ENCODE measurements at regions of chr5 and their contacts with region 1.

Region 1: GRCh38 chr5:134041570-134042411 is 37.0 kb upstream of the VDAC1 start:
- DNase-seq: peak in 1 of 5 donors; percentile 13
- H3K4me3 ChIP-seq: no peak overlapping the region
- H3K4me3 Mint-ChIP-seq: peak overlapping the region in 4 of 7 donors; percentile 41 to 64 (median 49)
- H3K27ac ChIP-seq: no peak overlapping the region
- H3K27ac Mint-ChIP-seq: peak overlapping the region in 7 of 8 donors; percentile 17 to 89 (median 72)
- H3K4me1 ChIP-seq: peaks cover 36% of the 10 kb centered on the region
- H3K4me1 Mint-ChIP-seq: peaks cover 19 to 56% (median 37%) of the 10 kb centered on the region in 3 donors
- H3K27me3 ChIP-seq: no peaks in the 10 kb centered on the region
- H3K27me3 Mint-ChIP-seq: no peaks in the 10 kb centered on the region

Region 2: GRCh38 chr5:134053840-134054338 is 12.1 kb after region 1 on chr5:
- CTCF ChIA-PET with region 1: interaction called, 36 read pairs
- POLR2A ChIA-PET with region 1: no interaction called
- DNase-seq: peak in 1 of 5 donors; percentile 35
- H3K4me3 ChIP-seq: peak overlapping the region; percentile 28
- H3K4me3 Mint-ChIP-seq: peak overlapping the region in 4 of 7 donors; percentile 24 to 76 (median 46)
- H3K27ac ChIP-seq: no peak overlapping the region
- H3K27ac Mint-ChIP-seq: peak overlapping the region in 7 of 8 donors; percentile 1 to 87 (median 76)
- H3K4me1 ChIP-seq: peaks cover 42% of the 10 kb centered on the region
- H3K4me1 Mint-ChIP-seq: peaks cover 16 to 41% (median 16%) of the 10 kb centered on the region in 3 donors
- H3K27me3 ChIP-seq: no peaks in the 10 kb centered on the region
- H3K27me3 Mint-ChIP-seq: no peaks in the 10 kb centered on the region

Region 3: DNA sequence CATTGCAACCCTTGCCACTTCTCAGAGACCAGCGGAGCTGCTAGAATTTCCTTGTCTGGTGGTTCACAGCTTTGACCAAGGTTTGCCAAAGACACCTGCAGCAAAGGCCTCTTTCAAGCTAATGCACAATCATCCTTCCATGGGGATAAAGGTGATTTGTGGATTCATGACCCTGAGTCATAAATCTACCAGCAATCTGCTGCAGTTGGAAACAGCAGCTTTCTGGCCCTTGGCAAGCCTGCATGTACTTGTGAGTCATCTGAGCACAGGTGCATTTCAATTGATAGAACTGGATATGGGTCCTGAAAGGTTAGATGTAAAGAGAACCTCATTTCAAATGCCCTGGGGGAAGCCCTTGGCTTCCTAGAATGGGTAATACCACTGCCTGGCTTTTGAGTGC is 51.1 kb after region 1 on chr5:
- CTCF ChIA-PET with region 1: interaction called, 20 read pairs
- POLR2A ChIA-PET with region 1: interaction called, 3 read pairs
- DNase-seq: no peak
- H3K4me3 ChIP-seq: no peak overlapping the region
- H3K4me3 Mint-ChIP-seq: peak overlapping the region in 5 of 7 donors; percentile 12 to 57 (median 31)
- H3K27ac ChIP-seq: no peak overlapping the region
- H3K27ac Mint-ChIP-seq: peak overlapping the region in 7 of 8 donors; percentile 1 to 91 (median 58)
- H3K4me1 ChIP-seq: peaks cover 92% of the 10 kb centered on the region
- H3K4me1 Mint-ChIP-seq: peaks cover 63 to 83% (median 72%) of the 10 kb centered on the region in 3 donors
- H3K27me3 ChIP-seq: no peaks in the 10 kb centered on the region
- H3K27me3 Mint-ChIP-seq: no peaks in the 10 kb centered on the region

Region 4: GRCh38 chr5:134125039-134126015 is 83.5 kb after region 1 on chr5:
- CTCF ChIA-PET with region 1: interaction called, 50 read pairs
- POLR2A ChIA-PET with region 1: interaction called, 7 read pairs
- DNase-seq: no peak
- H3K4me3 ChIP-seq: peak overlapping the region; percentile 79
- H3K4me3 Mint-ChIP-seq: peak overlapping the region; percentile 91 to 99 (median 96)
- H3K27ac ChIP-seq: peak overlapping the region; percentile 9
- H3K27ac Mint-ChIP-seq: peak overlapping the region; percentile 92 to 100 (median 98)
- H3K4me1 ChIP-seq: peaks cover 100% of the 10 kb centered on the region
- H3K4me1 Mint-ChIP-seq: peaks cover 89 to 99% (median 99%) of the 10 kb centered on the region in 3 donors
- H3K27me3 ChIP-seq: no peaks in the 10 kb centered on the region
- H3K27me3 Mint-ChIP-seq: peaks cover 0 to 2% of the 10 kb centered on the region in 2 donors

Region 5: GRCh38 chr5:134145779-134146581 is 104.2 kb after region 1 on chr5:
- CTCF ChIA-PET with region 1: interaction called, 429 read pairs
- POLR2A ChIA-PET with region 1: interaction called, 16 read pairs
- DNase-seq: peak; percentile 71 to 87 (median 76)
- H3K4me3 ChIP-seq: no peak overlapping the region
- H3K4me3 Mint-ChIP-seq: peak overlapping the region in 2 of 7 donors; percentile 26 to 57
- H3K27ac ChIP-seq: no peak overlapping the region
- H3K27ac Mint-ChIP-seq: peak overlapping the region; percentile 80 to 97 (median 90)
- H3K4me1 ChIP-seq: peaks cover 19% of the 10 kb centered on the region
- H3K4me1 Mint-ChIP-seq: peaks cover 30 to 80% (median 56%) of the 10 kb centered on the region in 3 donors
- H3K27me3 ChIP-seq: no peaks in the 10 kb centered on the region
- H3K27me3 Mint-ChIP-seq: no peaks in the 10 kb centered on the region

Region 6: DNA sequence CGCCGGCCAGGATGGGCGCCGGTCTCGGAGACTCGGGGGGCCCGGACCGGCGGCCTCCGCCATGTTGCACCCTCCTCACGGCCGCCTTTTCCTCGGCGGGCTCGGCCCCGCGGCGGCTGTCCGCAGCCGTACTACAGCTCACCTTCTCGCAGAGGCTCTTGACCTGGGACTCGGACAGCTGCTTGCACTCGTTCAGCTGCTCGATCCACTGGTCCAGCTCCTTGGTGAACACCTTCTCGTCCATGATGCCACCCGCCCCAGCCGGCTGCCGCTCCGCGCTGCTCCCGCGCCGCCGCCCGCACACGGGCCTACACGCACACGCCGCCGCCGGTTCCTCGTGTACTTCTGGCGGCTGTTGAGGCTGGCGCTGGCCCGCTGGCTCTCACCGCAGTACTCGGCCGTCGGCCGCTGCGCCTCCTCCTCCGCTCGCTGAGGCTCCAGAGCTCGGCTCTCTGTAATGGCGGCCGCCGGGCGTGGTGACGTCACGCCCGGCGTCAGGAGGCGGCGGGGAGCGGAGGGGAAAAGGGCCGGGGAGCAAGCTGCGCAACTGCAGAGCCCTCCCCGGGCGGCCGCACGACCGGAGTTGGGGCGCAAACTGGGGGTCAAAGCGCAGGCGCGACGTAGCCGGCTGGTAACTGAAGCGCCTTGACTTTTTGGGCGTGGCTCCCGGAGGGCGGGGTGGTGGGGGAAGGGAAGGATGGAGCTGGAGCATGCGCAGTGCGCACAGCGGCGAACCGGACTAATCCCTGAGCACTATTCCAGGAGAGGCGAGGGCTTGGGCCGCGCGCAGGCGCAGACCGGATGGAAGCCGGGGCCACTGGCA is 184.0 kb after region 1 on chr5 and contains the start of gene PPP2CA:
- CTCF ChIA-PET with region 1: interaction called, 13 read pairs
- POLR2A ChIA-PET with region 1: no interaction called
- DNase-seq: peak; percentile 98 to 100 (median 99)
- H3K4me3 ChIP-seq: peak within 1 kb of the TSS; percentile 85
- H3K4me3 Mint-ChIP-seq: peak within 1 kb of the TSS; percentile 94 to 100 (median 96)
- H3K27ac ChIP-seq: peak within 1 kb of the TSS; percentile 99
- H3K27ac Mint-ChIP-seq: peak within 1 kb of the TSS; percentile 98 to 100 (median 99)
- H3K4me1 ChIP-seq: peaks cover 41% of the 10 kb centered on the region
- H3K4me1 Mint-ChIP-seq: peaks cover 46 to 59% (median 56%) of the 10 kb centered on the region in 3 donors
- H3K27me3 ChIP-seq: no peaks in the 10 kb centered on the region
- H3K27me3 Mint-ChIP-seq: peaks cover 0 to 3% of the 10 kb centered on the region in 2 donors
- total RNA-seq, gene PPP2CA: 189 to 210 TPM